ENCODE measurements at regions of chr21 and their contacts with region 1.

Region 1: DNA sequence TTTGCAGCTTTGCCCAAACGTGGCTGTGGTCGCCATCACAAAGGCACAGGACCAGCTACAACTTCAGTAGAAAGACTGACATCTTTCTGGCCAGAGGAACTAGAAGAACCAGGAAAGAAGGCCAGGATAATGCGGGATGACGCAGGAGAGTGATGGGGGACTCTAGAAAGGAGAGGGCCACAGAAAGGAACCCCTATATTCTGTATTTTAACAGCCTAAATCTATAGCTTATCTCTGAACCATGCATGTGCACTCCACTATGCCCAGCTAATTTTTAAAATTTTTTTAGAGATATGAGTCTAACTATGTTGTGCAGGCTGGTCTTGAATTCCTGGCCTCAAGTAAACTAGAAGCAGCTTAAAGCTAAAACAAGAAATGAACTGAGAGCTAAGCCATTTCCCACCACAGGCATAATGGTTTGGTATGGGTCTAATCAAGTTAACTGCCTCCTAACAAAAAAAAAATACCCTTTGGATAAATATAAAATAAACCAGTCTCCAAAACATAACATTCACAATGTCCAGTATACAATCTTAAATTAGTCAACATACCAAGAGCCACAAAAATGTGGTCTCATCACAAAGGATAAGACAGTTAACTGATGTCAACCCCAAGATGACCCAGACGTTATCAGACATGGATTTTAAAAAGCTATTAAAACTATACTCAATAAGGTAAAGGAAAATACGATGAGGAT is 18.0 kb downstream of the LTN1 start:
- DNase-seq: no peak
- ATAC-seq: no peak
- H3K4me3 ChIP-seq: no peak overlapping the region
- H3K4me3 Mint-ChIP-seq: no peak overlapping the region
- H3K27ac ChIP-seq: no peak overlapping the region
- H3K27ac Mint-ChIP-seq: no peak overlapping the region
- H3K4me1 ChIP-seq: no peaks in the 10 kb centered on the region
- H3K4me1 Mint-ChIP-seq: peaks cover 16 to 25% (median 23%) of the 10 kb centered on the region in 3 donors
- H3K27me3 ChIP-seq: no peaks in the 10 kb centered on the region
- H3K27me3 Mint-ChIP-seq: no peaks in the 10 kb centered on the region

Region 2: DNA sequence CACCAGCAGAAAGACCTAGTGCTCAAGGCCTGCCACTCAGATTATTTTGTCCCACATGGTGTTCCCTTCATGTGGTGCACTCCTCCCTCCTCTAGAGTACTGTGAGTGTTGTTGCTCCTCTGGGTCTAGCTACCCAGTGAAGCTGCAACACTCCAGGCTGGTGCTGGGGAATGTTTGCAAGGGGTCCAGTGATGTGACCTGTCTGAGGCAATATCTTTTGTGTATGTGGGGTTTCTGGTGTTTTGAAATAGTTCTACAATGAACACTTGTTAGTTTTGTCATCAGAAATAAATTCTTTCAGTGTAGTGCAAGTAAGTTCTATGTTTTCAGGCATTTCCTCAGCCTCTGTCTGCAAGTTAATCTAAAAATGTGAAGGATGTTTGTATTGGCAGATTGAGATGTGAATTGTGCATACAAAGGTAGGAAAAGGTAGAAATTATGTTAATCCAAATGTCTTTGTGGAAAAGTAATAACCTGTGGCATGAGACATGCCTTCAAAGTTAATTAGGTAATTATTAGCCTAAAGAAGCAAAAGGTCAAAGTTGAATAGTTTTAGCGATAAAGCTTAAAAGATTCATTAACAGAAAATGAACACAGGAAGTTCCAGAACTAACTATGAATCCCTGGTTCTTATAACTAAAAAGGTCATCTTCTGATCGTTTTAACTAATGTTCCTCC is 598.8 kb before region 1 on chr21:
- CTCF ChIA-PET with region 1: no interaction called
- POLR2A ChIA-PET with region 1: no interaction called
- DNase-seq: no peak
- ATAC-seq: no peak
- H3K4me3 ChIP-seq: no peak overlapping the region
- H3K4me3 Mint-ChIP-seq: no peak overlapping the region
- H3K27ac ChIP-seq: no peak overlapping the region
- H3K27ac Mint-ChIP-seq: no peak overlapping the region
- H3K4me1 ChIP-seq: no peaks in the 10 kb centered on the region
- H3K4me1 Mint-ChIP-seq: no peaks in the 10 kb centered on the region
- H3K27me3 ChIP-seq: no peaks in the 10 kb centered on the region
- H3K27me3 Mint-ChIP-seq: no peaks in the 10 kb centered on the region

Region 3: DNA sequence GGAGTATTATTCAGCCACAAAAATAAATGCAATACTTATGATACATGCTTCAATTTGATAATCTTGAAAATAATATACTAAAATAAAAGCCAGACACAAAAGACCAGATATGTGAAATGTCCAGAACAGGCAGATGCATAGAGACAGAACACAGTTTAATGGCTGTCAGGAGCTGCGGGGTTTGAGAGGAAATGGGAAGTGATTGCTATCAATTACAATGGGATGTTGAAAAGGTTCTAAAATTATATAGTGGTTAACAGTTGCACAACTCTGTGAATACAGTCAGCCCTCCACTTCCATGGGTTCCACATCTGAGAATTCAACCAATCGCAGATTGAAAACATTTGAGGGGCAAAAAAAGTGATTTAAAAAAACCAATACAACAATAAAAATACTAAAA is 36.0 kb before region 1 on chr21:
- CTCF ChIA-PET with region 1: no interaction called
- POLR2A ChIA-PET with region 1: no interaction called
- DNase-seq: no peak
- ATAC-seq: no peak
- H3K4me3 ChIP-seq: no peak overlapping the region
- H3K4me3 Mint-ChIP-seq: no peak overlapping the region
- H3K27ac ChIP-seq: no peak overlapping the region
- H3K27ac Mint-ChIP-seq: no peak overlapping the region
- H3K4me1 ChIP-seq: no peaks in the 10 kb centered on the region
- H3K4me1 Mint-ChIP-seq: peaks cover 0 to 3% (median 0%) of the 10 kb centered on the region in 3 donors
- H3K27me3 ChIP-seq: no peaks in the 10 kb centered on the region
- H3K27me3 Mint-ChIP-seq: no peaks in the 10 kb centered on the region

Region 4: GRCh38 chr21:29002442-29003144 is 27.9 kb after region 1 on chr21:
- CTCF ChIA-PET with region 1: interaction called in 1 of 2 experiments, 3 read pairs
- POLR2A ChIA-PET with region 1: interaction called, 3 to 12 read pairs
- DNase-seq: peak; percentile 81 to 98 (median 96)
- ATAC-seq: peak; percentile 100
- H3K4me3 ChIP-seq: peak overlapping the region; percentile 71 to 90
- H3K4me3 Mint-ChIP-seq: peak overlapping the region; percentile 87 to 91 (median 90)
- H3K27ac ChIP-seq: peak overlapping the region; percentile 95
- H3K27ac Mint-ChIP-seq: peak overlapping the region; percentile 96 to 99
- H3K4me1 ChIP-seq: peaks cover 6 to 13% of the 10 kb centered on the region in 2 experiments
- H3K4me1 Mint-ChIP-seq: peaks cover 6 to 16% (median 14%) of the 10 kb centered on the region in 3 donors
- H3K27me3 ChIP-seq: no peaks in the 10 kb centered on the region
- H3K27me3 Mint-ChIP-seq: no peaks in the 10 kb centered on the region

Region 5: DNA sequence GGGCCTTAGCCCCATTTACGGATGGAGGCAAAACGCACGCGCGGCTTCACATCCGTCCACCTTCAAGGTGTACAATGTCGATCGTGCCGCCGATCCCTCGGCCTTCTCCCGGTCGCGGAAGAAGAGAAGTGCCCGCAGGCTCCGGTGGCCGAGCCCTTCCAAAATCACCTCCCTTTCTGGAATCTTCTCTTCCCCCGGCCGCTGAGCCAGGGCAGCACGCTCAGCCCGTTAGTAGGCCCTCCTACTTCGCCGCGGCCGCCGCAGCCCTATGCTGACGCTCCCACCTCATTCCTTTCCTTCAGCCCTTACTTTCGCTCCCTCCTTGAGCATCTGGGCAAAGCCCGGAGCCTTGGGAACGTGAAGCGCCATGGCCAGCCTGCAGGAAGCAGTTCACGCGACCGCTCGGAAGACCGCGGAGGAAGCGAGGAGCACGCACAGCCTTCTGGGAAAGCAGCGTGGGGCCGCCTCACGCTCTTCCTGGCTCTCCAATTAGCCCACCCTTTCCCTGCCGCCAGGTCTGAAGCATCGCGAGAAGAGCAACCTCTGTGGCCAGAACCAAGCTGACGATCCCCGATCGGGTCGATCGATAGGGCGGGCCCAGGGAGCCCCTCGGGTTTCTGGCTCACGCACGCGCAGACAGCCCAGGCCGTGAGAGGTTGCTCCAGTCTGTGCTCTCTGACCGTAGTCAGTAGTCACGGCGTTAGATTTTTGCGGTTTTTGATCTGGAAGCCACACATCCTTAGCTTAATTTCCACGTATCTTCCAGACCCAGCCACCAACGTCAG is 98.7 kb after region 1 on chr21 and contains the start of gene CCT8:
- CTCF ChIA-PET with region 1: no interaction called
- POLR2A ChIA-PET with region 1: no interaction called
- DNase-seq: peak; percentile 94 to 100 (median 99)
- ATAC-seq: peak; percentile 91 to 94 (median 92)
- H3K4me3 ChIP-seq: peak within 1 kb of the TSS; percentile 89 to 97
- H3K4me3 Mint-ChIP-seq: peak within 1 kb of the TSS; percentile 98 to 100 (median 100)
- H3K27ac ChIP-seq: peak within 1 kb of the TSS; percentile 84
- H3K27ac Mint-ChIP-seq: peak within 1 kb of the TSS; percentile 98 to 99
- H3K4me1 ChIP-seq: peaks cover 30 to 31% of the 10 kb centered on the region in 2 experiments
- H3K4me1 Mint-ChIP-seq: peaks cover 51 to 68% (median 67%) of the 10 kb centered on the region in 3 donors
- H3K27me3 ChIP-seq: no peaks in the 10 kb centered on the region
- H3K27me3 Mint-ChIP-seq: no peaks in the 10 kb centered on the region
- total RNA-seq, gene CCT8: 103 to 131 (median 115) TPM